PC-3 (cell line): ENCODE measurements at regions of chr13 and their contacts with region 1.

Region 1: DNA sequence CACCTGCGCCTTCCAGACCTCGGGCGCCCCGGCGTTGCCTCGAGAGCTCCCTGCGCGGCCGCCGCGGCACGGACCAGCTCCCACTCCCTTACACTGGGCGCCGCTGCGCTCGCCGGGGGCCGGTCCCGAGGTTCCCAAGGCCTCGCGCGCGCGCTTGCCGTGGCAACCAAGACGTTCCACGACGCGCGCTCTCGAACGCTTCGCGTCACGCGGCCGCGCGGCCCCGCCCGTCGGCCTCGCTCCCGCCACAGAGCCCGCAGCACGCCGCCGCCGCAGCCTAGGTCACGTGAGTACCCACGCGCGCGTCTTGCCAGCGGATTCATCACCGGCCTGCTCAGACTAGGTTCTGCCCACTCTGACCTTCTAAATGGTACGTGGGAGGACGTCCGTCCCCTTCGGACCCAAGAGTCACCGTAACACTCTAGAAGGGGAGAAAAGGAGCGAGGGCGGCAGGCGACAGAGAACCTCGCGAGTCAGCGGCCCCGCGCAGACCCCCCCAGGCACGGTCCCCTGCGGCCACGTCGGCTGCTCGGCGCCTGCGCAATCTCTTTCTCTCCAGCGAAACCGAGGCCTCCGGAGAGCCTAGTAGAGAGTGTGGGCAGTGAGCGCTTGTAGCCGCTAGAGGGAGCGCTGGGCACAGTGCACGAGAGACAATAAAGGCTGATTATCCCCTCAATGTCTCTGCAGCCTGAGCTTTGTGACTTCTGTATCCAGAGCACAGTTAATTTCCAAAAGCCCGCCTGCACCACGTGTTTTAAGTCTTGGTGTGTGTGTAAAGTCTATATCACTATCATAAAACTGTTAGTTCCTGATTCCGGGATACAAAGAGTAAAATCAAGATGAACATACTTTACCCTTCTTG is at the start of gene SPART:
- DNase-seq: peak; percentile 83
- ATAC-seq: peak; percentile 95
- H3K4me3 ChIP-seq: peak within 1 kb of the TSS; percentile 92
- H3K27ac ChIP-seq: peak within 1 kb of the TSS; percentile 40
- H3K4me1 ChIP-seq: no peaks in the 10 kb centered on the region
- H3K27me3 ChIP-seq: no peaks in the 10 kb centered on the region
- CTCF ChIP-seq: peak; percentile 84
- total RNA-seq, gene SPART: 15.0 and 23.3 TPM in 2 replicates

Region 2: GRCh38 chr13:36395280-36395679 is 48.8 kb after region 1 on chr13:
- CTCF ChIA-PET with region 1: interaction called, 4 read pairs
- POLR2A ChIA-PET with region 1: no interaction called
- intact Hi-C with region 1: loop called (anchors 2 kb)
- DNase-seq: peak; percentile 44
- ATAC-seq: peak; percentile 78
- H3K4me3 ChIP-seq: no peak overlapping the region
- H3K27ac ChIP-seq: no peak overlapping the region
- H3K4me1 ChIP-seq: no peaks in the 10 kb centered on the region
- H3K27me3 ChIP-seq: no peaks in the 10 kb centered on the region
- CTCF ChIP-seq: peak; percentile 51